ENCODE measurements at regions of chr14 and their contacts with region 1.

Region 1: DNA sequence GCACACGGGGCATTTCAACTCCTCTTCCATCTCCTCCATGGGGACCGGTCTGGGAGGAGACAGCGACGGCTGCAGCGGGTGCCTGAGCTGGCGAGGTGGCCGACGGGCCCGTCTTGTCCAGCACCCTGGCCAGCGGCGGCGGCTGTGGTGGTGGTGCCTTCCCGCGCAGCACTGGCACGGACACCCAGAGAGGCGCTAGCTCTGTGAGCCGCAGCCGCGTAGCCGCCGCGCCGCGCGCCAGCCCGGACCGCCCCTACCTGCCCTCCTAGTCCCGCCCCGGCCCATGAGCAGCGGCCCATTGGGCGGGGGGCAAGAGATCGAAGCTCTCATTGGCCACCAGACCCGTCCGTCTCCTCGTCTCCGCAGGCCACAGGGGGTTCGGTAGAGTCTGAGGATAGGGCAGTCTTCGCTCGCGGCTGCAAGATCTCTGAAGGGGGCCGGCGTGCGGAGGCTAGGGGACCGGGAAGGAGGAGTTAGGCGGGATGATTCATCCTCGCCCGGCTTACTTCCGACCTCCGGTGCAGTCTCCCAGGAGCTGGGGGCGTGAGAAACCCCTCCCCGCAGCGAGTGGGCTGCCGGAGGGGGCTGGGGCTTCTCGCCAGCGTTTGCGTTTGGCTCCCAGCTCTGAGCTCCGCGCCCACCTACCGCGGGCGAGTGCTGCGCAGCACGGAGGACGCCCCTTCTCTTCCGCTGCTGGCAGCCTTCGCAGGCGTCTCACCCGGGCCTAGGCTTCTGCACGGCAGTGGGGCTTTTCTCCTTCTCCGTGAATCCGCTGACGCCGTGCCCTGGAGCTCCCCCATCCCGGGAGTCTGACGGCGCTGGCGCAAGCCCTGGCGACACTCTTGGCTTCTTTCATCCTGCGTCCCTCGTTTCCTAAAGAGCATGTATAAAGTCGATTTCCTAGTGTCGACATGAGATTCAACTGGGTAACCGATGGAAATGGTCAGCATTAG is at the start of gene TRIM9:
- DNase-seq: peak; percentile 86 to 90 (median 86)
- H3K4me3 ChIP-seq: peak within 1 kb of the TSS; percentile 42 to 51
- H3K4me3 Mint-ChIP-seq: peak within 1 kb of the TSS; percentile 90 to 96 (median 94)
- H3K27ac ChIP-seq: peak within 1 kb of the TSS; percentile 23
- H3K27ac Mint-ChIP-seq: peak within 1 kb of the TSS in 6 of 7 donors; percentile 63 to 89 (median 82)
- H3K4me1 ChIP-seq: peaks cover 18% of the 10 kb centered on the region
- H3K4me1 Mint-ChIP-seq: peaks cover 12 to 31% (median 13%) of the 10 kb centered on the region in 4 donors
- H3K27me3 ChIP-seq: peaks cover 8% of the 10 kb centered on the region
- H3K27me3 Mint-ChIP-seq: peaks cover 5 to 20% of the 10 kb centered on the region in 2 donors
- total RNA-seq, gene TRIM9: 0.44 to 0.55 TPM

Region 2: GRCh38 chr14:49512147-49512551 is 1583.0 kb before region 1 on chr14:
- CTCF ChIA-PET with region 1: no interaction called
- POLR2A ChIA-PET with region 1: no interaction called
- intact Hi-C with region 1: no loop called
- DNase-seq: no peak
- H3K4me3 ChIP-seq: no peak overlapping the region
- H3K4me3 Mint-ChIP-seq: no peak overlapping the region
- H3K27ac ChIP-seq: no peak overlapping the region
- H3K27ac Mint-ChIP-seq: no peak overlapping the region
- H3K4me1 ChIP-seq: no peaks in the 10 kb centered on the region
- H3K4me1 Mint-ChIP-seq: no peaks in the 10 kb centered on the region
- H3K27me3 ChIP-seq: no peaks in the 10 kb centered on the region
- H3K27me3 Mint-ChIP-seq: peaks cover under 1 to 3% of the 10 kb centered on the region in 2 donors

Region 3: GRCh38 chr14:50432131-50432530 is 663.0 kb before region 1 on chr14:
- CTCF ChIA-PET with region 1: no interaction called
- POLR2A ChIA-PET with region 1: no interaction called
- intact Hi-C with region 1: loop called (anchors 5 kb)
- DNase-seq: no peak
- H3K4me3 ChIP-seq: no peak overlapping the region
- H3K4me3 Mint-ChIP-seq: no peak overlapping the region
- H3K27ac ChIP-seq: no peak overlapping the region
- H3K27ac Mint-ChIP-seq: no peak overlapping the region
- H3K4me1 ChIP-seq: no peaks in the 10 kb centered on the region
- H3K4me1 Mint-ChIP-seq: no peaks in the 10 kb centered on the region
- H3K27me3 ChIP-seq: no peaks in the 10 kb centered on the region
- H3K27me3 Mint-ChIP-seq: no peaks in the 10 kb centered on the region

Region 4: GRCh38 chr14:50999726-51000125 is 95.5 kb before region 1 on chr14:
- CTCF ChIA-PET with region 1: no interaction called
- POLR2A ChIA-PET with region 1: no interaction called
- intact Hi-C with region 1: no loop called
- DNase-seq: no peak
- H3K4me3 ChIP-seq: no peak overlapping the region
- H3K4me3 Mint-ChIP-seq: no peak overlapping the region
- H3K27ac ChIP-seq: no peak overlapping the region
- H3K27ac Mint-ChIP-seq: no peak overlapping the region
- H3K4me1 ChIP-seq: no peaks in the 10 kb centered on the region
- H3K4me1 Mint-ChIP-seq: no peaks in the 10 kb centered on the region
- H3K27me3 ChIP-seq: peaks cover 4% of the 10 kb centered on the region
- H3K27me3 Mint-ChIP-seq: peaks cover 4% of the 10 kb centered on the region in 2 donors

Region 5: GRCh38 chr14:51239813-51240803 is 144.9 kb after region 1 on chr14 and contains the start of gene TMX1:
- CTCF ChIA-PET with region 1: no interaction called
- POLR2A ChIA-PET with region 1: no interaction called
- intact Hi-C with region 1: loop called (anchors 1 kb)
- DNase-seq: peak; percentile 80 to 86 (median 82)
- H3K4me3 ChIP-seq: peak within 1 kb of the TSS; percentile 84 to 99
- H3K4me3 Mint-ChIP-seq: peak within 1 kb of the TSS in 1 of 8 donors; percentile 37
- H3K27ac ChIP-seq: peak within 1 kb of the TSS; percentile 65
- H3K27ac Mint-ChIP-seq: no peak within 1 kb of the TSS
- H3K4me1 ChIP-seq: peaks cover 51% of the 10 kb centered on the region
- H3K4me1 Mint-ChIP-seq: peaks cover 15 to 29% (median 21%) of the 10 kb centered on the region in 4 donors
- H3K27me3 ChIP-seq: no peaks in the 10 kb centered on the region
- H3K27me3 Mint-ChIP-seq: no peaks in the 10 kb centered on the region
- total RNA-seq, gene TMX1: 28.5 to 32.9 TPM

Region 6: DNA sequence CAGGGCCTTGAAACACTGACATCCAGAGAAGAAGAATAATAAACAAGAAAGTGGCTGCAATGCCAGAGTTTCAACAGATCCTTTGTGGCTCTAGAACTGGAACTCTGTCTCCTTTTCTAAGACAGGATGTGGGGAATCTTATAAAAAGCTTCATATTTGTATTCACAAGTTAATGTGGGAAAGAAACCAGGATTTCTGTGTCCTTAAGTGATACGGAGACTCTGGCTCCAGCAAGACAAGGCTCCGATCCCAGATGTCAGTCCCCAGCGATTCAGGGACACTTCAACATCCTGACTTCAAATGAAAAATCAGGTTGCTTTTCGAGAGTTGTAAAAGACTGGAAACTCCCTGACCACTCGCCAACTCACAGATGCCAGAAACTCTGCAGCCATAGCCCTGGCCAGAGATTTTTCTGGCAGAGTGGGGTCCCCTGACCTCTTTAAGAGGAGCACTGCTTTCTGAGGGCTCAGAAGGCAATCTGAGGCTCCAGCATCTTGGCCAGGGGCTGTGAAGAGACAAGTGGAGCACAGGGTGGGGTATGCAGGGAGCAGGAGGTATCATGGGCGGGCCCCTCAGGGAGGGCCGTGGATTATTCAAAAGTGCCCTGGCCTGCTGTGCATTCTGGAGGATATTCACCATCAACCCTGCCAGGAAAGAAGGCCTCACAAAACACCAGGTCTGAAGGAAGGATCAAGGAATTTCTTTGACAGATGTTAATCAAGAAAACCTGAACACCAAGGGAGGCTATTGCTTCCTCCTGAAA is 198.2 kb after region 1 on chr14:
- CTCF ChIA-PET with region 1: no interaction called
- POLR2A ChIA-PET with region 1: no interaction called
- intact Hi-C with region 1: no loop called
- DNase-seq: no peak
- H3K4me3 ChIP-seq: no peak overlapping the region
- H3K4me3 Mint-ChIP-seq: no peak overlapping the region
- H3K27ac ChIP-seq: no peak overlapping the region
- H3K27ac Mint-ChIP-seq: no peak overlapping the region
- H3K4me1 ChIP-seq: no peaks in the 10 kb centered on the region
- H3K4me1 Mint-ChIP-seq: peaks cover 0 to 2% (median under 1%) of the 10 kb centered on the region in 4 donors
- H3K27me3 ChIP-seq: no peaks in the 10 kb centered on the region
- H3K27me3 Mint-ChIP-seq: no peaks in the 10 kb centered on the region